ENCODE measurements at regions of chr11 and their contacts with region 1.

Region 1: DNA sequence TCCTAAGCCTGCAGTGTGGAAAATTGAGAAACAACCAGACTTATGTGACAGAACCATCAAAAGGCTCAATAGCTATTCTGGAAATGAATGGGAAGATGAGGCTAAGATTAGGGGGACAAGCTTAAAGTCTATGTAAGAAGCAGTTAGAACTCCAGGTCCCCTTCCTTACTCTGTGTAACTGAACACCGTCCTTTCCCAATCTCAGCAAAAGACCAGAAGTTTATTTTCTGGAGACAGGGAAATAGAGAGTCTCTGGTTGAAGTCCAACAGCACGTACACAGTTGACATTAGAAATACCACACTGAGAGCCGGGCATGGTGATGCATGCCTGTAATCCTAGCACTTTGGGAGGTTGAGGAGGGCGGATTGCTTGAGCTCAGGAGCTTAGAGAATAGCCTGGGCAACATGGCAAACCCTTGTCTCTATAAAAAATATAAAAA is 93.9 kb downstream of the CD44 start:
- DNase-seq: no peak
- ATAC-seq: no peak
- H3K4me3 ChIP-seq: no peak overlapping the region
- H3K27ac ChIP-seq: peak overlapping the region in 2 of 12 donors; percentile 48 to 56
- H3K4me1 ChIP-seq: peaks cover 0 to 45% (median 0%) of the 10 kb centered on the region in 12 donors
- H3K27me3 ChIP-seq: no peaks in the 10 kb centered on the region
- CTCF ChIP-seq: no peak
- POLR2A ChIP-seq: no peak

Region 2: DNA sequence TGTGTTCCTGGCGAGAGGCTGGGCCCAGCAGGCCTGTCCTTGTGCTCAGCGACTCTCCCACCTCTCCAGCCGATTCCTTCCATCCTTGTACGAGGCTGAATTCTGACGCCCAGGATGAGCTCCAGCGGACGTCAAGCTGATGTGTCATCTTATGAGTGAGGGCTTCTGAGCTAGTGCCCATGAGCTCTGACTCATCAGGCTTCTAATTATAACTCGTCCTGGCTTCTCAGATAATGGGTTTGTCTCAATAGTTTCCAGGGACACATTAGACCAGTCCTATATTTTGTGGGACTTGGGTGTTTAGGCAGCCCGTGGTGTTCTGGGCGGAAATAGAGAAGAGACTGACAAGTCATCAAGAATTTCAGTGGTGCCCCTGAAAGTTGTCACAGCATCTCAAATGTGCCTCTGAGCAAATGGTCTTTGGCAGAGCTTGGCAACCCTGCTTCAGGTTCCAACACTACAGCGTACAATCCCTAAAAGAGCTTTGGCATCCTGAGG is 202.1 kb before region 1 on chr11:
- intact Hi-C with region 1: no loop called
- DNase-seq: peak; percentile 61 to 89 (median 68)
- ATAC-seq: peak; percentile 96 to 99 (median 98)
- H3K4me3 ChIP-seq: no peak overlapping the region
- H3K27ac ChIP-seq: peak overlapping the region in 10 of 12 donors; percentile 1 to 71 (median 54)
- H3K4me1 ChIP-seq: peaks cover 0 to 27% (median 5%) of the 10 kb centered on the region in 12 donors
- H3K27me3 ChIP-seq: no peaks in the 10 kb centered on the region
- CTCF ChIP-seq: no peak
- POLR2A ChIP-seq: no peak

Region 3: GRCh38 chr11:35151241-35151640 is 81.7 kb before region 1 on chr11:
- intact Hi-C with region 1: loop called in 1 of 10 experiments (anchors 5 kb)
- DNase-seq: no peak
- ATAC-seq: no peak
- H3K4me3 ChIP-seq: no peak overlapping the region
- H3K27ac ChIP-seq: peak overlapping the region in 2 of 12 donors; percentile 6 to 32
- H3K4me1 ChIP-seq: peaks cover 0 to 100% (median 0%) of the 10 kb centered on the region in 12 donors
- H3K27me3 ChIP-seq: no peaks in the 10 kb centered on the region
- CTCF ChIP-seq: no peak
- POLR2A ChIP-seq: no peak

Measured in heart left ventricle (tissue), 16 donors.